Activated CD8-positive, alpha-beta T cell treated with anti-CD3 and anti-CD28 coated beads for 36 hours (primary cell): ENCODE measurements at regions of chr12 and their contacts with region 1.

Region 1: GRCh38 chr12:55619354-55620138 is 17.1 kb upstream of the OR10P1 start:
- DNase-seq: peak; percentile 46
- ATAC-seq: peak; percentile 68
- H3K4me3 Mint-ChIP-seq: no peak overlapping the region
- H3K27ac Mint-ChIP-seq: no peak overlapping the region
- H3K4me1 Mint-ChIP-seq: peaks cover 8% of the 10 kb centered on the region
- H3K27me3 Mint-ChIP-seq: peaks cover 22% of the 10 kb centered on the region
- CTCF ChIP-seq: peak; percentile 86

Region 2: DNA sequence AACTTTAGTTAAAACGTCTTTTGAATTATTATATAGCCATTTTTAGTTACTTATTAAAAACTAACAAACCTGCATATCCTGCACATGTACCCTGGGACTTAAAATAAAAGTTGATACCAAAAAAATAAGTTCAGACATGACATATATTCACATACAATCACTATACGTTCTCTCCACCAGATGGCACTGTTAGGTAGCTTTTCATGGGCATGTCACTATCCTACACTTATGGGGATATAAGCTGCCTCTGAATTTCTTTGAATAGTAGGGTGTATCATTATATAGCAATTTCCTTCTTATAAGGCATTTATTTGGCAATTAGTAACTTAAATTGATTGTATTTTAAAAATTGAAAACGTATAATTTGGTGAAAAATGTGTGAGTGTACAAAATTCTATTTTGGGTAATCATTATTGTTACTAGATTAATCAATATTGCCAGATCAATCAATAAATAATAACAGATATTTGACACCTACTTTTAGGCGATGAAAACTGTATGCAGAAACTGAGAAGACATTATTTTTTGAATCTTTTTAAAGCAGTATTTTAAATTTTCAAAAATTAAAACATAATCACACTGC is 430.5 kb before region 1 on chr12:
- CTCF ChIA-PET with region 1: interaction called, 45 read pairs
- POLR2A ChIA-PET with region 1: no interaction called
- intact Hi-C with region 1: loop called (anchors 2 kb)
- DNase-seq: peak; percentile 62
- ATAC-seq: peak; percentile 74
- H3K4me3 Mint-ChIP-seq: no peak overlapping the region
- H3K27ac Mint-ChIP-seq: no peak overlapping the region
- H3K4me1 Mint-ChIP-seq: no peaks in the 10 kb centered on the region
- H3K27me3 Mint-ChIP-seq: peaks cover 27% of the 10 kb centered on the region
- CTCF ChIP-seq: peak; percentile 84

Region 3: DNA sequence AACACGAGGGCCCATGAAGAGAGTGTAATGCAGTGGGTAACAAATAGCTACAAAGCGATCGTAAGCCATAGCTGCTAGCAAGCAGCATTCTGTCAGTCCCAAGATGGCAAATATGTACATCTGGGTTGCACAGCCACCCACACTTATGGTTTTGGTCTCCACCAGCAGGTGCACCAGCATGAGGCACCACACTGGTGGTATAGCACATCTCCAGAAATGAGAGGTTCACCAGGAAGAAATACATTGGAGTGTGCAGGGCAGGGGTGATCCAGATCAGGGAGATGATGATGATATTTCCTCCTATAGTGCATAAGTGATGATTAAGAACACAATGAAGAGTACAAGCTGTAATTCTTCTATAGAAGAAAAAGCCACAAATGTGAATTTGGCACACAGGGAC is 425.2 kb before region 1 on chr12:
- CTCF ChIA-PET with region 1: interaction called, 45 read pairs
- POLR2A ChIA-PET with region 1: no interaction called
- intact Hi-C with region 1: loop called (anchors 2 kb)
- DNase-seq: no peak
- ATAC-seq: no peak
- H3K4me3 Mint-ChIP-seq: no peak overlapping the region
- H3K27ac Mint-ChIP-seq: no peak overlapping the region
- H3K4me1 Mint-ChIP-seq: no peaks in the 10 kb centered on the region
- H3K27me3 Mint-ChIP-seq: peaks cover 40% of the 10 kb centered on the region
- CTCF ChIP-seq: no peak

Region 4: DNA sequence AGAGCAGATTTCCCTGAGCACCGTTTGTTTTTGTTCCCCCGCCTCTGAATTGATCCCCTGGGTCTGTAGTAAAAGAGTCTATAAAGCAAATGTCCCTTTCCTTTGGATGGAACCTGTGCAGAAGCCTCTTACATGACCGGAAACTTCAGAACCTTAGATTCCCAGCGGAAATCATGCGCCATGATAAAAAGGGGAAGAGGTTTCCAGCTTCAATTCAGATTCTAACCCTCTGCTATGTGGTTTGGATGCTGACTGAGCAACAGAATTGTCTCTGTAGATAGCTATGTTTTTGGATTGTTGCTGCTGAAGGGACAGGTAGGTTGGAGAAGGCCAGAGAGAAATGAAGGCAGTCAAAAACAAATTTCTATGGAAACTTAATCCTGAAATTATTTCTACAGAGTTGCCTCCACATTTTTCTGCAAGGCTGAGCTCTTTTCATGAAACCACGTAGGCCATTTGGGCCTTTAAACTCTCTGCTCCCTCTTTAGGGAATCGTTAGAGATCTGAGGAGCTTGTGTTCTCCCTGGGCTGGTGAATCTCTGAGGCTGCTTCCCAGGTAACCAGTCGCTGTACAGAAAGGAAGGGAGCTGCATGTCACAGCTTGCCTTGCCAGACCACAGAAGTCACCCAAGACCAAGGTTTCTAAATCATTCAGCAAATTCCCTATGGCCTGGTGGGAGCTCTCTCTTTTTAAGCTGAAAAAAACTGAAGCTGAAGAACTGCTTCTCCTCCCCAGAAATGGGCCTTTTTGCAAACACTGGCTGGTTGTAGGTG is 11.5 kb before region 1 on chr12:
- CTCF ChIA-PET with region 1: interaction called, 16 read pairs
- POLR2A ChIA-PET with region 1: no interaction called
- intact Hi-C with region 1: no loop called
- DNase-seq: no peak
- ATAC-seq: no peak
- H3K4me3 Mint-ChIP-seq: no peak overlapping the region
- H3K27ac Mint-ChIP-seq: no peak overlapping the region
- H3K4me1 Mint-ChIP-seq: peaks cover 7% of the 10 kb centered on the region
- H3K27me3 Mint-ChIP-seq: peaks cover 39% of the 10 kb centered on the region
- CTCF ChIP-seq: no peak

Region 5: DNA sequence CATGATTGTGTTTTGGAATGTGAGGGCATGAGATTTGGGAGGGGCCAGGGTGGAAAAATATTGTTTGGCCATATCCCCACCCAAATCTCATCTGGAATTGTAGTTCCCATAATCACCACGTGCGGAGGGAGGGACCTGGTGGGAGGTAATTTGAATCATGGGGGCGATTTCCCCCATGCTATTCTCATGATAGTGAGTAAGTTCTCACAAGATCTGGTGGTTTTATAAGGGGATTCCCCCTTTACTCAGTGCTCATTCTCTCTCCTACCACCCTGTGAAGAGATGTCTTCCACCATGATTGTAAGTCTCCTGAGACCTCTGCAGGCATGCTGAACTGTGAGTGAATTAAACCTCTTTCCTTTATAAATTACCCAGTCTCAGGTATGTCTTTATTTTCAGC is 32.8 kb after region 1 on chr12:
- CTCF ChIA-PET with region 1: interaction called, 30 read pairs
- POLR2A ChIA-PET with region 1: interaction called, 4 read pairs
- intact Hi-C with region 1: loop called (anchors 1 kb)
- DNase-seq: peak; percentile 46
- ATAC-seq: peak; percentile 94
- H3K4me3 Mint-ChIP-seq: no peak overlapping the region
- H3K27ac Mint-ChIP-seq: peak overlapping the region; percentile 42
- H3K4me1 Mint-ChIP-seq: peaks cover 20% of the 10 kb centered on the region
- H3K27me3 Mint-ChIP-seq: peaks cover 1% of the 10 kb centered on the region
- CTCF ChIP-seq: peak; percentile 12